ENCODE measurements at regions of chr15 and their contacts with region 1.

Region 1: GRCh38 chr15:45429974-45430792 is 51.8 kb upstream of the GATM start:
- DNase-seq: peak; percentile 87
- H3K4me3 Mint-ChIP-seq: peak overlapping the region; percentile 20
- H3K27ac Mint-ChIP-seq: no peak overlapping the region
- H3K4me1 Mint-ChIP-seq: peaks cover 2% of the 10 kb centered on the region
- H3K27me3 Mint-ChIP-seq: peaks cover 3% of the 10 kb centered on the region

Region 2: GRCh38 chr15:45448066-45448510 is 17.9 kb after region 1 on chr15:
- CTCF ChIA-PET with region 1: interaction called, 11 read pairs
- POLR2A ChIA-PET with region 1: no interaction called
- intact Hi-C with region 1: no loop called
- DNase-seq: no peak
- H3K4me3 Mint-ChIP-seq: no peak overlapping the region
- H3K27ac Mint-ChIP-seq: no peak overlapping the region
- H3K4me1 Mint-ChIP-seq: no peaks in the 10 kb centered on the region
- H3K27me3 Mint-ChIP-seq: no peaks in the 10 kb centered on the region

Region 3: DNA sequence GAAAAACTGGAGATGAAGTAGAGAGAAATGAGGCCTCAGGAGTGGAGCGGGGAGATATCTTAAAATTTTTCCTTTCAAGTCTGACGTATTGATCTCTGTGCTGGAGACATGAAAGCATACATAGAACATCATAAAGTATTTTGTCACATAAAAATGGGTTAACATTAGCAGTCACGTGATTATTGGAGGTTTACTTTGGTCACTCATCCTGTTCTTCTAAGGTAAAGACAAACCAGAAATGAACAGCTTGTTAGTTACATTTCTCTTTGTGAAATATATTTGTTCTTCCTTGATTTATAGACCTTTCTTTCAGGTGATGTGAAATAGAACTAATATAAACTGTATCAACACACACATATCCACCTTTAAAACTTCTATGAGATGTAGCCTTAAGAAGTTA is 528.7 kb after region 1 on chr15:
- CTCF ChIA-PET with region 1: no interaction called
- POLR2A ChIA-PET with region 1: no interaction called
- intact Hi-C with region 1: no loop called
- DNase-seq: no peak
- H3K4me3 Mint-ChIP-seq: no peak overlapping the region
- H3K27ac Mint-ChIP-seq: no peak overlapping the region
- H3K4me1 Mint-ChIP-seq: no peaks in the 10 kb centered on the region
- H3K27me3 Mint-ChIP-seq: no peaks in the 10 kb centered on the region

Measured in activated CD4-positive, alpha-beta memory T cell treated with anti-CD3 and anti-CD28 coated beads for 36 hours (primary cell).